Activated CD8-positive, alpha-beta T cell treated with anti-CD3 and anti-CD28 coated beads, Interleukin-2, amount 10 ng/mL, durations not matched to agents 7 days and 5 days (primary cell): ENCODE measurements at regions of chr3 and their contacts with region 1.

Region 1: DNA sequence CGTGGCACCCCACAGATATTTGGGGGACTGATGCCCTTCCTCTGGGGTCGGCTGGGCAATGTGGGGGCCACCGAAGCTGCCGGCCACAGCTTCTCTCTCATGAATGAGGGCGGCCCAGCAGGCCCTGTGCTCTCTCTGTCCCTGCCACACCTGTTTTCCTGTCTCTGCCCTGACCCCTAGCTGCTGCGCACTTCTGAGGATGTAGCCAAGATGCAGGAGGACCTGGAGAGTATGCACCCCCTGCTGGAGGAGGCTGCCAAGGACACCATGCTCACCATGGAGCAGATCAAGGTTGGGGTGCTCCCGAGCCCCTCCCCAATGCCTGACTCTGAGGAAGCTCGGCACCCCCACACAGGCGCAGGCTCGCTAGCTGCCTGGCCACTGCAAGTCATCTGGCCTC is 59.7 kb downstream of the SEMA3G start:
- DNase-seq: peak; percentile 53
- ATAC-seq: peak; percentile 70
- H3K4me3 Mint-ChIP-seq: no peak overlapping the region
- H3K27ac Mint-ChIP-seq: no peak overlapping the region
- H3K4me1 Mint-ChIP-seq: peaks cover 5% of the 10 kb centered on the region
- H3K27me3 Mint-ChIP-seq: no peaks in the 10 kb centered on the region

Region 2: GRCh38 chr3:52364324-52365035 is 20.7 kb before region 1 on chr3:
- CTCF ChIA-PET with region 1: interaction called, 12 read pairs
- POLR2A ChIA-PET with region 1: no interaction called
- DNase-seq: no peak
- ATAC-seq: no peak
- H3K4me3 Mint-ChIP-seq: no peak overlapping the region
- H3K27ac Mint-ChIP-seq: no peak overlapping the region
- H3K4me1 Mint-ChIP-seq: no peaks in the 10 kb centered on the region
- H3K27me3 Mint-ChIP-seq: no peaks in the 10 kb centered on the region

Region 3: GRCh38 chr3:52439426-52440248 is 54.5 kb after region 1 on chr3:
- CTCF ChIA-PET with region 1: no interaction called
- POLR2A ChIA-PET with region 1: no interaction called
- DNase-seq: no peak
- ATAC-seq: no peak
- H3K4me3 Mint-ChIP-seq: no peak overlapping the region
- H3K27ac Mint-ChIP-seq: no peak overlapping the region
- H3K4me1 Mint-ChIP-seq: peaks cover 5% of the 10 kb centered on the region
- H3K27me3 Mint-ChIP-seq: no peaks in the 10 kb centered on the region

Region 4: GRCh38 chr3:53426918-53427317 is 1041.8 kb after region 1 on chr3:
- CTCF ChIA-PET with region 1: no interaction called
- POLR2A ChIA-PET with region 1: no interaction called
- DNase-seq: no peak
- ATAC-seq: no peak
- H3K4me3 Mint-ChIP-seq: no peak overlapping the region
- H3K27ac Mint-ChIP-seq: no peak overlapping the region
- H3K4me1 Mint-ChIP-seq: no peaks in the 10 kb centered on the region
- H3K27me3 Mint-ChIP-seq: peaks cover 24% of the 10 kb centered on the region